PC-9 (cell line): ENCODE measurements at regions of chr2 and their contacts with region 1.

Region 1: GRCh38 chr2:29053670-29054400 is 20.5 kb downstream of the PCARE start:
- DNase-seq: peak in 1 of 2 experiments; percentile 30
- H3K4me3 ChIP-seq: no peak overlapping the region
- H3K27ac ChIP-seq: peak overlapping the region; percentile 85
- H3K4me1 ChIP-seq: peaks cover 25% of the 10 kb centered on the region
- H3K27me3 ChIP-seq: no peaks in the 10 kb centered on the region
- CTCF ChIP-seq: peak; percentile 75

Region 2: DNA sequence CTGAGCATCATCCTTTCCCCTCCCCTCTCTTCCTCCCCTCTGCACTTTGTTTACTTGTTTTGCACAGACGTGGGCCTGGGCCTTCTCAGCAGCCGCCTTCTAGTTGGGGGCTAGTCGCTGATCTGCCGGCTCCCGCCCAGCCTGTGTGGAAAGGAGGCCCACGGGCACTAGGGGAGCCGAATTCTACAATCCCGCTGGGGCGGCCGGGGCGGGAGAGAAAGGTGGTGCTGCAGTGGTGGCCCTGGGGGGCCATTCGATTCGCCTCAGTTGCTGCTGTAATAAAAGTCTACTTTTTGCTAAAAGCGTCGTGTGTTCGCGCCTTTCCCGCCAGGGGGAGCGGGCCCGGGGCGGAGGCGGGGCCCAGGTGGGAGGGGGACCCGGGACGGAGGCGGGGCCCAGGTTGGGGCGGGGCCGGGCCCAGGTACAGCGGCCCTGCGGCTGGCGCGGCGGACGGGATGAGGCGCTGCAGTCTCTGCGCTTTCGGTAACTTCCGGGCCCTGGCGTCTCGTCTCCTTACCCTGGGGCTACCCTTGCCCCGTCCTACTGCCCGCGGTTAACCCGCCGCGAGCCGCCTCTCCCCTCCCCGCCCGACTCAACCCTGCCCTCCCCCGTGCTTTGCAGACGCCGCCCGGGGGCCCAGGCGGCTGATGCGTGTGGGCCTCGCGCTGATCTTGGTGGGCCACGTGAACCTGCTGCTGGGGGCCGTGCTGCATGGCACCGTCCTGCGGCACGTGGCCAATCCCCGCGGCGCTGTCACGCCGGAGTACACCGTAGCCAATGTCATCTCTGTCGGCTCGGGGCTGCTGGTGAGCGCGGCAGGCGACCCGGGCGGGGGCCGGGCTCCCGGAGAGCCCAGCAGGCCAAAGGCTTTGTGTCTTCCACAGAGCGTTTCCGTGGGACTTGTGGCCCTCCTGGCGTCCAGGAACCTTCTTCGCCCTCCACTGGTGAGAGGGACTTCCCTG is 1611.6 kb before region 1 on chr2 and contains the start of gene KRTCAP3:
- CTCF ChIA-PET with region 1: no interaction called
- POLR2A ChIA-PET with region 1: no interaction called
- intact Hi-C with region 1: no loop called
- DNase-seq: peak; percentile 69 to 86
- H3K4me3 ChIP-seq: peak within 1 kb of the TSS; percentile 79
- H3K27ac ChIP-seq: peak within 1 kb of the TSS; percentile 63
- H3K4me1 ChIP-seq: peaks cover 19% of the 10 kb centered on the region
- H3K27me3 ChIP-seq: no peaks in the 10 kb centered on the region
- CTCF ChIP-seq: peak; percentile 68
- total RNA-seq, gene KRTCAP3: 62.9 and 91.7 TPM in 2 replicates

Region 3: GRCh38 chr2:29196792-29197788 is 143.3 kb after region 1 on chr2:
- CTCF ChIA-PET with region 1: no interaction called
- POLR2A ChIA-PET with region 1: no interaction called
- intact Hi-C with region 1: loop called (anchors 2 kb)
- DNase-seq: peak in 1 of 2 experiments; percentile 61
- H3K4me3 ChIP-seq: no peak overlapping the region
- H3K27ac ChIP-seq: no peak overlapping the region
- H3K4me1 ChIP-seq: no peaks in the 10 kb centered on the region
- H3K27me3 ChIP-seq: no peaks in the 10 kb centered on the region
- CTCF ChIP-seq: peak; percentile 91

Region 4: DNA sequence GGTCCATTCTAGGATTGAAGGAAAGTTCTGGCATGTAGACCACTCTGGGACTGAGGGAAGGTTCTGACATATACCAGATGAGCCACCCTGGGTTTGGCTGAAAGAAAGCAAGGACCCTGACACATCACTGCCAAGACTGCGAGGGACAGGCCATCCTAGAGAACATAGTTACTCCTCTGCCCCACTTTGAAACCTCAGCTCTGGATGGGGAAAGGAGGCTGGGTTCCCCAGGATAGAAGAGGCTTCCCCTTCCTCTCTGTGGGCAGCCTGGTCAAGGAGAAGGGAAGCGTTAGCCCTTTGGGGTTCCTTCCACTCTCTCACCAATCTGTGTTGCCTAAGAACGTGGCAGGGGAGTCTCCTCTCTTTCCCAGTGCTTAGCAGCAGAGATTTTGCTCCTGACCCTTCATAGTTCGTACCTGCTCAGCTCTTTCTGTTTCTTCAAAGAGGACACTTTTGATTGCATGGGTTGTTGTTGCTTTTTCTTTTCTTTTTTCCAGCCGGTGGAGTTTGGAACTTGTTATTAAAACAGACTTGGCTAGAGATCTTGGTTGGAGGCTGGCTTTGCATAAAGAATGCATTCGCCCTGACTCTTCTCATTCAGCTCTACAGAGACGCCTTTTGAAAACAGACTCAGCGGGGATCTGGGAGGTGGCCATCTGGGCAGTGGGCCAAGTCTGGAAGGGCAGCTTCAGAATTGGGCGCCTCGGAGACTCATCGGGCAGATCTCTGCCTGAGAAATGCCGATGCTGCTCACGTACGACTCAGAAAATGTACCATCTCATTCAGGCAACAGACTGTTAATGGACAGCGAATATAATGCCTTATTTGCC is 227.5 kb after region 1 on chr2:
- CTCF ChIA-PET with region 1: no interaction called
- POLR2A ChIA-PET with region 1: no interaction called
- intact Hi-C with region 1: no loop called
- DNase-seq: peak; percentile 65 to 79
- H3K4me3 ChIP-seq: no peak overlapping the region
- H3K27ac ChIP-seq: no peak overlapping the region
- H3K4me1 ChIP-seq: no peaks in the 10 kb centered on the region
- H3K27me3 ChIP-seq: peaks cover 96% of the 10 kb centered on the region
- CTCF ChIP-seq: no peak

Region 5: GRCh38 chr2:29420999-29421782 is 367.4 kb after region 1 on chr2:
- CTCF ChIA-PET with region 1: no interaction called
- POLR2A ChIA-PET with region 1: no interaction called
- intact Hi-C with region 1: no loop called
- DNase-seq: no peak
- H3K4me3 ChIP-seq: no peak overlapping the region
- H3K27ac ChIP-seq: no peak overlapping the region
- H3K4me1 ChIP-seq: no peaks in the 10 kb centered on the region
- H3K27me3 ChIP-seq: peaks cover 73% of the 10 kb centered on the region
- CTCF ChIP-seq: no peak